CD4-positive, alpha-beta T cell (primary cell): ENCODE measurements at regions of chrX and their contacts with region 1.

Region 1: GRCh38 chrX:44542567-44543325 is at the start of gene FUNDC1:
- DNase-seq: peak; percentile 77 to 97 (median 90)
- ATAC-seq: peak; percentile 94
- H3K4me3 ChIP-seq: peak within 1 kb of the TSS; percentile 88
- H3K4me3 Mint-ChIP-seq: peak within 1 kb of the TSS; percentile 100
- H3K27ac ChIP-seq: peak within 1 kb of the TSS; percentile 46 to 54
- H3K27ac Mint-ChIP-seq: peak within 1 kb of the TSS; percentile 97
- H3K4me1 ChIP-seq: peaks cover 9% of the 10 kb centered on the region
- H3K4me1 Mint-ChIP-seq: peaks cover 37% of the 10 kb centered on the region
- H3K27me3 ChIP-seq: no peaks in the 10 kb centered on the region
- H3K27me3 Mint-ChIP-seq: no peaks in the 10 kb centered on the region
- CTCF ChIP-seq: no peak
- total RNA-seq, gene FUNDC1: 4.8 to 5.4 TPM

Region 2: DNA sequence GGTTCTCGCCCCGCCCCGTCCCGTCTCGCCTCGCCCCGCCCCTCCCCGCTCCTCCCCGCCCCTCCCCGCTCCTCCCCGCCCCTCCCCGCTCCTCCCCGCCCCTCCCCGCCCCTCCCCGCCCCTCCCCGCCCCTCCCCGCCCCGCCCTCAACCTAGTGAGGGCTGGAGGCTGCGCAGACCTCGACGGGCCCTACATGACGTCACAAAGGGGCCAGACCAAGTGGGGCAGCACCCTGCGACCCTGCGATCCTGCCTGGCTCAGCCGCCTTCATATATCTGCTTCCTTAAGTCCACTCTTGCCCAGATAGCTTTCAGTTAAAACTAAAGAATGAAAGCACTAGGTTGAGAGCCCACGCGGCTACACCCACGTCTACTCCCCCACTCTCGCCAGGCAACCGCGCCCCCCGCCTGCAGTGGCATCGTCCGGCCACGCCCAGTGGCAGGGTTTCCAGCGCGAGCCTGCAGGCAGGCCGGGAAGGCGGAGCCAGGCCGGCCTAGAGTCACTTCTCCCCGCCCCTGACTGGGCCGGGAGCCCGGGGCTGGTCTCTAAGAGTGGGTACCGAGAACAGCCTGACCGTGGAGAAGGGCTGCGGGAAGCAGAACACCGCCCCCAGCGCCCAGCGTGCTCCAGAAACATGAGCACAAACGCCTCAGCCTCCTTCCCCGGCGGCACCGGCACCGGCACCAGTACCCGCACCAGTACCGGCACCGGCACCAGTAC is 888.2 kb before region 1 on chrX:
- CTCF ChIA-PET with region 1: no interaction called
- POLR2A ChIA-PET with region 1: no interaction called
- intact Hi-C with region 1: loop called in 1 of 2 experiments (anchors 10 kb)
- DNase-seq: peak; percentile 70 to 94 (median 82)
- ATAC-seq: peak; percentile 91
- H3K4me3 ChIP-seq: peak overlapping the region; percentile 71
- H3K4me3 Mint-ChIP-seq: peak overlapping the region; percentile 92
- H3K27ac ChIP-seq: peak overlapping the region in 1 of 2 donors; percentile 79
- H3K27ac Mint-ChIP-seq: peak overlapping the region; percentile 95
- H3K4me1 ChIP-seq: peaks cover 17% of the 10 kb centered on the region
- H3K4me1 Mint-ChIP-seq: peaks cover 10% of the 10 kb centered on the region
- H3K27me3 ChIP-seq: peaks cover 0 to 5% of the 10 kb centered on the region in 2 experiments
- H3K27me3 Mint-ChIP-seq: no peaks in the 10 kb centered on the region
- CTCF ChIP-seq: no peak